Activated naive CD4-positive, alpha-beta T cell treated with anti-CD3 and anti-CD28 coated beads for 36 hours (primary cell): ENCODE measurements at regions of chr1 and their contacts with region 1.

Region 1: DNA sequence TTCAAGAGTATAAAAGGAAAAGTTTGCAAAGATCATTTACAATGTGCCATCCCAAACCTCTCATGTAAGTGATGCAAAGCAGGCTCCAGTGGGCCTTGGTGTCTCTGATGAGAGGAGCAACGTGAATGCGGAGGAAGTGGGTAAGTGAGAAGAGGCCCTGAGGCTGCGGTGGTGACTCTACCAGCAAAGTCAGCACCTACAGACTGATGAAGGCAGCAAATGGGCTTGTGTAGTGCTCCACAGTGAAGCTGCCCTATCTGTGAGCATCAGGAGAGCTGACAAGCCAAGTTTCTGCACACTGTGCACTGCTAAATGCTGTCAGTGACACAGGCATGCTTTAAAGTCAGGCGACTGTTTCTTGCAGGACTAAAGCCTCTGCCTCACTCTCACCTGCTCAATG is 15.6 kb upstream of the RAP1A start:
- DNase-seq: peak; percentile 90
- H3K4me3 Mint-ChIP-seq: peak overlapping the region; percentile 7
- H3K27ac Mint-ChIP-seq: peak overlapping the region; percentile 92
- H3K4me1 Mint-ChIP-seq: peaks cover 76% of the 10 kb centered on the region
- H3K27me3 Mint-ChIP-seq: no peaks in the 10 kb centered on the region

Region 2: DNA sequence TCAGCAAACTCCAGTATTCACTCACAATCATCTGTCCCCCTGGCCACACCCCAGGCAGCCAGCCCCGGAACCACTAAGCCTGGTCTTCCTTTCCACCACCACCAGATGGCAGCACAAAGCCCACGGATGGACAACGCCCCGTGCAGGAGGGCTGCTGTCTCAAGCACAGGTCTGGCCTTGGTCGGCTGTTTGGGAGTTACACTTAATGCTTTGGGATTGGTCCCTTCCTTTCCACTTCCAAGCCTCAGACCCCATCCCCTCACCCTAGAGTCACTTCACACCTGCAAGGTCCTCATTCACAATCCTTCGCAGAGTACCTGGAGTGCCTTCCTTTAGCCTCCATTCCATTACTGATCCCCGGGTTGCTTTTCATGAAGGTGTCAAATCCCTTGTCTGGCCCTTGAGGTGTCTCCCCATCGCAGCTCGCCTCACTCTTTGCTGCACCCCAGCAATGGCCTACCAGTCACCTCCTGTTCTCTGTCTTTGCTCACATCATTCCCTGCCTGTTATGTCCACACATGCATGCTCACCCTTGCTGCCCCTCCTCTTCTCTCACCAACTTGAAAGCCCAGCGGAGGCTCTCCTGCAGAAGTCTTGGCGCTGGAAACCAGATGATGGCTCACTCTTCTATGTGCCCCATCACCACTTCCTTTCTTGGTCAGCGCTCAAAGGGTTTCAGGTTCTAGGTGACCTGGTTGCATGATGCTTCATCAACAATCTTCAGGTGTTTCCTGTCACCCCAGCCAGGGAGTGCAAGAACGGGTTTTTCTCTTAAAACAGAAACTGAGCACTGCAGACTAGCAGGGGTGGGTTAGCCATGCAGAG is 972.9 kb before region 1 on chr1:
- CTCF ChIA-PET with region 1: no interaction called
- intact Hi-C with region 1: loop called (anchors 10 kb)
- DNase-seq: peak; percentile 92
- H3K4me3 Mint-ChIP-seq: no peak overlapping the region
- H3K27ac Mint-ChIP-seq: no peak overlapping the region
- H3K4me1 Mint-ChIP-seq: peaks cover 54% of the 10 kb centered on the region
- H3K27me3 Mint-ChIP-seq: no peaks in the 10 kb centered on the region

Region 3: DNA sequence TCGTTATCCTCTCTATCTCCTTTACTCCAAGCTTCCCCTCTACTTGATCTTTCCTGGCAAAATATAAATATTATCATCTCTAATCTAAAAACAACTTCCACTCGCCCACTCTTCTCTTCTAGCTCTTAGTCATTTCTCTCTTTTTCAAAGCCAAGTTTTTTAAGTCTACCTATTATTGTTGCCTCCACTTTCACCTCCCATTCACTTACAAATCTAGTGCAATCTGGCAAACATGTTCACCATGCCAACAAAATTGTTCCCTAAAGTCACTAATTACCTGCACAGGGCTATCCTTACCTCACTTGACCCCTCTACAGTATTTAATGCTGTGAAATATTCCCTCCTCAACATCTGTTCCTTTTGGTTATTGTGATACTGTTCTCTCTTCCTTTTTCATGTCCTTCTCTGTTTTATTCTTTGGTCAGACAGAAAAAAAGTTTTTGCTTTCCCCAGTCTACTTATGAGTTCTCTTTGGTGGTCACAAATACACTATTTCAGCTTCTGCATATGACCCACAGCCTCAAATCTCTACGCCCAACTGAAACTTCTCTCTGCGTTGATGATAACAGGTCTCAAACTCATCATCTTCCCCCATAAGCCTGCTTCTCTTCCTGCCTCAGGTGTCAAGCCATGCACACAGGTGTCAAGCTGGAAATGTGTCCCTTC is 16.3 kb before region 1 on chr1:
- CTCF ChIA-PET with region 1: interaction called, 5 read pairs
- intact Hi-C with region 1: loop called (anchors 1 kb)
- DNase-seq: no peak
- H3K4me3 Mint-ChIP-seq: no peak overlapping the region
- H3K27ac Mint-ChIP-seq: no peak overlapping the region
- H3K4me1 Mint-ChIP-seq: peaks cover 15% of the 10 kb centered on the region
- H3K27me3 Mint-ChIP-seq: no peaks in the 10 kb centered on the region

Region 4: GRCh38 chr1:111619635-111620440 is 15.9 kb after region 1 on chr1 and contains the start of gene RAP1A:
- CTCF ChIA-PET with region 1: interaction called, 45 read pairs
- intact Hi-C with region 1: loop called (anchors 1 kb)
- DNase-seq: peak; percentile 97
- H3K4me3 Mint-ChIP-seq: peak within 1 kb of the TSS; percentile 93
- H3K27ac Mint-ChIP-seq: peak within 1 kb of the TSS; percentile 96
- H3K4me1 Mint-ChIP-seq: peaks cover 68% of the 10 kb centered on the region
- H3K27me3 Mint-ChIP-seq: no peaks in the 10 kb centered on the region
- total RNA-seq, gene RAP1A: 152 to 155 TPM

Region 5: DNA sequence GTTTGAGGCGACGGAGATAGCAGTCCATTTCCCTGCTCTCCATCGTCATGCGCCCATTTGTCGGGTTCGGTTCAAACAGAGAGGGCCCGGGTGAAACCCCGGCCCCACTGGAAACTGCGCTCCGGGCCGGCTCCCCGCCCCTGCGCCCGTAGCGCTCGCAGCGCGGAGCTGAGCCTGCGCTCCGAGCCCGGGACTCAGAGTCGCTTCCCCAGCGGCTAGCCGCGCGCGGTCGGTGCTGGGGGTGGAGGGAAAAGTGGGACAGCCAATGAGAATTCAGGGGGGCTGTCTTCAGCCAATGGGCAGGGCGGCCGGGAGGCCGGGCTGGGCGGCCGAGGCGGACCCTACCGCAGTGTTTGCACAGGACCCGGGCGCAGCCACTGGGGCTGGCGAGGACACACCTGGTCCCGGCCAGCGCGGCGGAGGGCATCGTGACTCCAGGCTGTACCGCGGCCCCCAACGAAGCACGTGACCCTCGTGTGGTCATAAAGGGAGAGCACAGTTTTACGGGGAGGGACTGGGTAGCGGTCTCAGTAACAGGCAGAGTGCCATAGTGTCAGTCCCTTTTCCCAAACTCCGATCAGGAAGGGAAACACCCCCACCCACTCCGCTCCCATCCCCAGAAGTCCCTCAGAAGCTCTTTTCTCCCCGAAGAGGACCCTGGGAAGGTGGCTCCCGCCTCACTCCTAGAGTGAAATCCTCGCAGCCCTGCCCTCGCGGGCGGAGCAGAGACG is 135.4 kb after region 1 on chr1 and contains the start of gene INKA2:
- CTCF ChIA-PET with region 1: no interaction called
- intact Hi-C with region 1: loop called (anchors 1 kb)
- DNase-seq: peak; percentile 82
- H3K4me3 Mint-ChIP-seq: peak within 1 kb of the TSS; percentile 87
- H3K27ac Mint-ChIP-seq: peak within 1 kb of the TSS; percentile 60
- H3K4me1 Mint-ChIP-seq: peaks cover 16% of the 10 kb centered on the region
- H3K27me3 Mint-ChIP-seq: peaks cover 35% of the 10 kb centered on the region
- total RNA-seq, gene INKA2: 1.9 to 3.2 TPM